CD8-positive, alpha-beta T cell (primary cell): ENCODE measurements at regions of chr15 and their contacts with region 1.

Region 1: DNA sequence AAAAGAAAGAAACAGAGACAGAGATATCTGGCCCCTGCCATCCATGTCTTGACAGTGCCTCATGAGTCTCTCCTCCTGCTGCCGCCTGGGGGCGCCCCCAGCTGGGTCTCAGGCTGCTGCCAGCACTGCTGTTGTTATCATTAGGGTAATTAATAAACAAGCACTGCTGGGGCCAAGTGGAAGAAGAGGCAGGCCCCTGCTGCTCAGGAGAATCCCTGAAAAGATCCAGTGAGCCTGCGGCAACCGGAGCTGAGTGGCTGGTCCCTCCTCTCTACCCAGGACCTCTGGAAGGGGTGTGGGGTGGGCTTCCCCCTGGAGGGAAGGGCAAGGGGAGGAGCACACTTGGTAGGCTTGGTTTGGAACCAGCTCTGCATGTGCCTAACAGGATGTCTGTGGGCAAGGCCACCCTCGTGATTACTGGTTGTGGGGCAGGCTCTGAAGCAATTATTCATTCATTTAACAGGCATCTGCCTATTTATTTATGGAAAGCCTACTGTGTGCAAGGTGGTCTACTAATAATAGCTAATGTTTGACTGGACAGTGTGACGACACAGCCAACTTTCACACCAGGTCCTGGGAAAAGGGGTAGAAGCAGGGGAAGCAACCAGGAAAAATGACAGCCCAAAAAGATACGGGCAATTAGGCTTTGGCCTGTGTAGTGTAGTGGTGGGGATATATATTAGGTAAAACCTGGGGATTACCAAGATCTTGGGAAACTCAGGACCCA is 1.2 kb upstream of the TYRO3 start:
- DNase-seq: peak; percentile 47 to 90 (median 77)
- ATAC-seq: peak; percentile 88
- H3K4me3 ChIP-seq: peak overlapping the region; percentile 4 to 41
- H3K4me3 Mint-ChIP-seq: peak overlapping the region; percentile 86
- H3K27ac ChIP-seq: peak overlapping the region in 1 of 2 experiments; percentile 69
- H3K27ac Mint-ChIP-seq: peak overlapping the region; percentile 84
- H3K4me1 ChIP-seq: peaks cover 19% of the 10 kb centered on the region
- H3K4me1 Mint-ChIP-seq: peaks cover 14% of the 10 kb centered on the region
- H3K27me3 ChIP-seq: peaks cover 6 to 10% of the 10 kb centered on the region in 2 experiments
- H3K27me3 Mint-ChIP-seq: peaks cover 18% of the 10 kb centered on the region
- CTCF ChIP-seq: peak; percentile 88

Region 2: DNA sequence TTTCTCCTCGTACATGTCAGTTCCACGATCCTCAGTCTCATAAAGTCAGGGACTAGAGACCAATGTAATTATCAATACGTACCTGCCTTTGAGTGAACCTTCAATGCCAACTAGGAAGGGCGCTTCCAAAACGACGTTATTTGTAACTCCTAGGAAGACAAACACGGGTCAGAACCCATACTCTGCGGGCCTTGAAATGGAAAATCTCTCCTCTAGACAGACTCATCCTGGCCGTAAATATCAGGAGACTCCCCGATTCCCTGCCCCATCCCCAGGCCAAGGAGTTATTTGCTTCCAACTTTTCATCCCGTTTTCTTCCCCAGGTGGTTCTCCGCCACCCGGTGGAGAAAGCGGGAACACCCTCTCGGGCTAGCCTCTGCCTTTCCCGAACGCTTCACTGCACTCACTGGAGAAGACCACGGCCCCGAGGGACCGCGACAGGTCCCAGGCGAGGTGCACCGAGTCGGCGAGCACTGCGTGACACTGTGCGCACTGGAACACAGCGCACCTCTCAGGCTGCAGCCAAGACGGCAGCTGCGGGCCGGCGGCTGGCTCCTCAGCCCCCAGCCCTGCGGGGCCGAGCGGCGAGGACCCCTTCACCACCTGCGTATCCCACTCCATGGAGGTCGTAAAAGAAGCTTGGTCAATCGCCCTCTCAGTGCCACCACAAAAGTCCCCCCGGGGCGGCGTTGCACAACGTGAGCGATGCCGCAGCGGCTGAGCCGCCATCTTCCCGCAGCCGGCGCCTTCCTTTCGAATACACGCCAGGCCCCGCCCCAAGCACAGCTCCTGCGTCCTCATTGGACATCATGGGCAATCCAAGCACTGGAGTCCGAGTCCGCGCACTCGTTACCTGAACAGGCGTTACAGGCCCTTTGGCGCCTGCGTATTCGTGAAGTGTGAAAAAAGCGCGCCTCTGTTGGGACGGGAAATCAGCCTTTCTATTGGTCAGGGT is 225.7 kb before region 1 on chr15 and contains the start of gene OIP5:
- CTCF ChIA-PET with region 1: no interaction called
- POLR2A ChIA-PET with region 1: no interaction called
- intact Hi-C with region 1: loop called in 1 of 2 experiments (anchors 5 kb)
- DNase-seq: peak; percentile 95 to 100 (median 96)
- ATAC-seq: peak; percentile 96
- H3K4me3 ChIP-seq: peak within 1 kb of the TSS; percentile 84 to 94
- H3K4me3 Mint-ChIP-seq: peak within 1 kb of the TSS; percentile 97
- H3K27ac ChIP-seq: peak within 1 kb of the TSS; percentile 46 to 63
- H3K27ac Mint-ChIP-seq: peak within 1 kb of the TSS; percentile 87
- H3K4me1 ChIP-seq: peaks cover 14% of the 10 kb centered on the region
- H3K4me1 Mint-ChIP-seq: peaks cover 30% of the 10 kb centered on the region
- H3K27me3 ChIP-seq: no peaks in the 10 kb centered on the region
- H3K27me3 Mint-ChIP-seq: no peaks in the 10 kb centered on the region
- CTCF ChIP-seq: peak; percentile 58
- total RNA-seq, gene OIP5: not detected

Region 3: GRCh38 chr15:41544650-41545015 is 13.2 kb before region 1 on chr15:
- CTCF ChIA-PET with region 1: interaction called, 4 read pairs
- POLR2A ChIA-PET with region 1: interaction called, 6 read pairs
- intact Hi-C with region 1: loop called (anchors 1 kb)
- DNase-seq: peak in 7 of 9 experiments; percentile 16 to 61 (median 55)
- ATAC-seq: peak; percentile 30
- H3K4me3 ChIP-seq: peak overlapping the region; percentile 88 to 95
- H3K4me3 Mint-ChIP-seq: peak overlapping the region; percentile 91
- H3K27ac ChIP-seq: peak overlapping the region in 1 of 2 experiments; percentile 64
- H3K27ac Mint-ChIP-seq: peak overlapping the region; percentile 95
- H3K4me1 ChIP-seq: peaks cover 8% of the 10 kb centered on the region
- H3K4me1 Mint-ChIP-seq: peaks cover 18% of the 10 kb centered on the region
- H3K27me3 ChIP-seq: no peaks in the 10 kb centered on the region
- H3K27me3 Mint-ChIP-seq: no peaks in the 10 kb centered on the region
- CTCF ChIP-seq: no peak

Region 4: DNA sequence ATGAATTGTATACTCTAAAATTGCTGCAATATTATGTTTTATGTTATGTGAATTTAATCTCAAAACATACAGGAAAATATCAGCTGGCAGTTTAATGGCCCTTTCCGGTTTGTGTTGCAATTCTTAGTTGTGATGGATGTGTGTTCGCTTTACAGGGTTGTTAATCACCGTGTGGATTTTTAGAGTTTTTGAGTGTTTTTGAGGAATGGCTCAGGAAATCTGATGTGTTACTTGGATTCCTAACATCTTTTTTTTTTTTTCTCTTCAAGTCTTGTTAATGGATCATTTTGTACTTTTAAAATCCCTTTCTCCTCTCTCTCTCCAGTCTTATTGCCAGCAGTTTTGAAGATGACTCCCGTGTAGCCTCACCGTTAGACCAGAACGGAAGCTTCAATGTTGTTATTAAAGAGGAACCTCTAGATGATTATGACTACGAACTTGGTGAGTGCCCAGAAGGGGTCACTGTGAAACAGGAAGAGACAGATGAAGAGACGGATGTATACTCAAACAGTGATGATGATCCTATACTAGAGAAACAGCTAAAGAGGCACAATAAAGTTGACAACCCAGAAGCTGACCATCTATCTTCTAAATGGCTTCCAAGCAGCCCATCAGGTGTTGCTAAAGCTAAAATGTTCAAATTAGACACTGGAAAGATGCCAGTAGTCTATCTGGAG is 138.1 kb after region 1 on chr15:
- CTCF ChIA-PET with region 1: no interaction called
- POLR2A ChIA-PET with region 1: interaction called, 3 read pairs
- intact Hi-C with region 1: loop called in 1 of 2 experiments (anchors 2 kb)
- DNase-seq: peak; percentile 7 to 78 (median 41)
- ATAC-seq: peak; percentile 96
- H3K4me3 ChIP-seq: no peak overlapping the region
- H3K4me3 Mint-ChIP-seq: peak overlapping the region; percentile 29
- H3K27ac ChIP-seq: peak overlapping the region in 1 of 2 experiments; percentile 44
- H3K27ac Mint-ChIP-seq: peak overlapping the region; percentile 69
- H3K4me1 ChIP-seq: peaks cover 22% of the 10 kb centered on the region
- H3K4me1 Mint-ChIP-seq: peaks cover 54% of the 10 kb centered on the region
- H3K27me3 ChIP-seq: no peaks in the 10 kb centered on the region
- H3K27me3 Mint-ChIP-seq: no peaks in the 10 kb centered on the region
- CTCF ChIP-seq: peak; percentile 41

Region 5: DNA sequence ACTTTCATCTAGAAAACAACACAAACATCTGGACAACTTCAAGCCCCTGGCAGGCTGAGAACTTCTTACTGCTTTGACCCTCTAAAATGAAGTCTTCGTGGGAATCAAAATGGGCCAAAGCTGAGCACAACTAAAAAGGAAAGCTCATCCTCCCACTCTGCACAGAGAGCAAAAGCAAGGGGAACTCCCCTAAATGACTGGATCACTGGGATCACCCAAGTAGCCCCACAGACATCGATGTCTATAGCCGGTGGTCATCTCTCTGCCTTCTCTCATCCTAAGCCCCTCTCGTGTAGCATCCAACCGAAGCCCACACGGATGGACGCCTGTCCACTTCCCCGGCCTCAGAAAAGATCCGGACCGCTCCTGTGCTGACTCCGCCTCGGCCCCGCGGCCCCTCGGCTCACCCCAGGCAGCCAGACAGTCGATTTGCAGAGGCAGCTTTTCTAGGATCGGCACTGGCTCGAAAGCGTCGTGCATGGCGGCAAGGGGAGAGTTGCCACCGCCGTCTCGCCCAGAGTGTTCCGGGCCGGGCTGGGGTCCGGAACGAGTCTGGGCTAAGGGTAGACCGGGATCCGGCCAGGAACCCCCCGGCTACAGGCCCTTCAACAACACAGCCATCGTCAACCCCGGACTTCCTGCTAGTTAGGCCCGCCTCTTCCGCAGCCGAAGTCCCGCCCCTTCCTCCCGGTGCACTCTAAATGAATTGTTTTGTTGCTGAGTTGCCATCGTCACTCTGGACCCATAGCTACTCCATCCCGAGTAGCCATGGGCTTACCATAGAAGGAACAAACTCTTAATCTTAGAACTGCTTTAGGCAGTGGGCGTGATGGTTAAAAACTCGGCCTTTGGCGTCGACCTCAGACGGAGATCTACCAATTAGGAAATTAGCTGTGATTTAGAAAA is 650.1 kb after region 1 on chr15 and contains the start of gene VPS39:
- CTCF ChIA-PET with region 1: no interaction called
- POLR2A ChIA-PET with region 1: no interaction called
- intact Hi-C with region 1: loop called in 1 of 2 experiments (anchors 5 kb)
- DNase-seq: peak; percentile 65 to 90 (median 85)
- ATAC-seq: peak; percentile 98
- H3K4me3 ChIP-seq: peak within 1 kb of the TSS; percentile 73 to 96
- H3K4me3 Mint-ChIP-seq: peak within 1 kb of the TSS; percentile 97
- H3K27ac ChIP-seq: peak within 1 kb of the TSS; percentile 83 to 84
- H3K27ac Mint-ChIP-seq: peak within 1 kb of the TSS; percentile 95
- H3K4me1 ChIP-seq: peaks cover 23% of the 10 kb centered on the region
- H3K4me1 Mint-ChIP-seq: peaks cover 40% of the 10 kb centered on the region
- H3K27me3 ChIP-seq: no peaks in the 10 kb centered on the region
- H3K27me3 Mint-ChIP-seq: no peaks in the 10 kb centered on the region
- CTCF ChIP-seq: no peak
- total RNA-seq, gene VPS39: 81.5 to 82.9 TPM